ENCODE measurements at regions of chr5 and their contacts with region 1.

Region 1: DNA sequence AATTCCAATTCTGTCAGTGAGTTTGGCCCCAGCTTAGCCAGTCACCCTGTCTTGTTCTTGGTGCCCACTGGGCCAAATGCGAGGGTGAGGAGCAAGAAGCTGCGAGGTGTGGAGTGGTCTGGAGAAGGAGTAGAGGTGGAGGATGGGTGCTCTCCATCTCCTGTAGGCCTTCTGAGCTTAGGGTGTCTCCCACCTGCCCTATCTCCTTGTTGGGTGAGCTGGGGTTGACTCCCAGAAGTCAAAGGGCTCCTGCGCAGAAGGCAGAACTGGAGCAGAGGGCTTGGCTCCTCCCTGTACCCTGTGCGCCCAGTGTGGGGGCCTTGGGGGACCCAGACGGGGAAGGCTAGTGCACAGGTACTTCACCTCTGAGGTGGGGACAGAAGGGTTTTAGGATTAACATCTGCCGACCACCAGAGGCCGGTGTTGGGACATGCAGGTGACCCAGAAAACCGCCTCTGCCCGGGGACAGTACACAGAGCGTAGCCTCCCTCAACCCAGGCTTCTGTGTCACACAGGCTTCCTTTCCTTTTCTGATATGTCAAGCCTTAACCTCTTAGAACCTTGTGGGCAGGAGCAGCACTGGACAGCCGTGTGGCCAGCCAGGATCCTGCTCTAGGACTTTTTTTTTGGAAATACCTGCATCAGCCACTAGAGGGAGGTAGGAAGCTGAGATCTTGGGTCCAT is 16.9 kb downstream of the IL5 start:
- DNase-seq: peak; percentile 71
- ATAC-seq: peak; percentile 53
- H3K4me3 ChIP-seq: no peak overlapping the region
- H3K4me3 Mint-ChIP-seq: peak overlapping the region; percentile 8
- H3K27ac ChIP-seq: no peak overlapping the region
- H3K27ac Mint-ChIP-seq: no peak overlapping the region
- H3K4me1 ChIP-seq: peaks cover 41 to 45% of the 10 kb centered on the region in 2 donors
- H3K4me1 Mint-ChIP-seq: peaks cover 49% of the 10 kb centered on the region
- H3K27me3 ChIP-seq: no peaks in the 10 kb centered on the region
- H3K27me3 Mint-ChIP-seq: no peaks in the 10 kb centered on the region
- CTCF ChIP-seq: peak; percentile 89

Region 2: DNA sequence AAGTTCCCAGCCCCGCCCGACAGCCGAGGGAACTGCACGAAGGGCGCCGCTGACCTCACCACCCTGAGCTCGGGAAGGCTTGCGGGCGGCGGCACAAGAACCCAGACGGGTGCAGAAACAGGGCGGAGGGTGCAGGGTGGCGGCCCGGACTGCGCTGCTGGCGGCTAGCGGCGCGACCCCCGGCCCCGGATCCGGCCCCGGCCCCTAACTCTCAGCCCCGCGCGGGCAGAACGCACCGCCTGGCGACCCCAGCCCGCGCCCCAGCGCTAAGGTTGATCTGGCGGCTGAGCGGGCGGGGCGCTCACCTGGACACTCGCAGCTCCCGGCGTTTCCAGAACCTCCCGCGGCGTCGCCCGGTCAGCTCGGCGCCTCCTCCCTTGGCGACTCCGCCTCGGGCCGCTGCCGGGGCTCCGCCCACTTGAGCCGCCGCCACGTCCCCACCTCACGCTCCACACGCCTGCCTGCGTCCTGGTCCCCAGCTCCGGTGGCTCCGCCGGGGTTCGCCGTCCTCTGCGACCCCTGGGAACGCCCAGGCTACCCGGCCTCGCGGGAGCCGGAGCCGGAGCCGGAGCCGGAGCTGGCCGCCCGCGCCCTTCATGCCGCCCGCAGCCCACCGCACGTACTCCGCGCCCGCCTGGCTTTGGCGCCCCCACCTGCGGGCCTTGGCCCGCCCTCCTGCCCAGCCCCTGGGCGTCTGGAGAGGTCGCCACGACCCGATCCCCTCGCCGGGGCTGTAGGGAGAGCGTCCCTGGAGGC is 298.8 kb before region 1 on chr5 and contains the start of gene P4HA2:
- CTCF ChIA-PET with region 1: no interaction called
- POLR2A ChIA-PET with region 1: no interaction called
- intact Hi-C with region 1: no loop called
- DNase-seq: peak; percentile 57
- ATAC-seq: peak; percentile 85
- H3K4me3 ChIP-seq: peak within 1 kb of the TSS in 4 of 5 experiments; percentile 35 to 66 (median 61)
- H3K4me3 Mint-ChIP-seq: peak within 1 kb of the TSS; percentile 77
- H3K27ac ChIP-seq: no peak within 1 kb of the TSS
- H3K27ac Mint-ChIP-seq: no peak within 1 kb of the TSS
- H3K4me1 ChIP-seq: peaks cover 33 to 42% of the 10 kb centered on the region in 2 donors
- H3K4me1 Mint-ChIP-seq: peaks cover 39% of the 10 kb centered on the region
- H3K27me3 ChIP-seq: peaks cover 0 to 21% (median 9%) of the 10 kb centered on the region in 4 experiments
- H3K27me3 Mint-ChIP-seq: peaks cover 19% of the 10 kb centered on the region
- CTCF ChIP-seq: no peak
- total RNA-seq, gene P4HA2: 0.22 and 0.25 TPM in 2 replicates

Region 3: GRCh38 chr5:132540764-132541163 is 14.3 kb after region 1 on chr5:
- CTCF ChIA-PET with region 1: interaction called, 16 read pairs
- POLR2A ChIA-PET with region 1: no interaction called
- intact Hi-C with region 1: no loop called
- DNase-seq: no peak
- ATAC-seq: no peak
- H3K4me3 ChIP-seq: no peak overlapping the region
- H3K4me3 Mint-ChIP-seq: no peak overlapping the region
- H3K27ac ChIP-seq: no peak overlapping the region
- H3K27ac Mint-ChIP-seq: no peak overlapping the region
- H3K4me1 ChIP-seq: no peaks in the 10 kb centered on the region
- H3K4me1 Mint-ChIP-seq: no peaks in the 10 kb centered on the region
- H3K27me3 ChIP-seq: peaks cover 0 to 8% (median under 1%) of the 10 kb centered on the region in 4 experiments
- H3K27me3 Mint-ChIP-seq: peaks cover 17% of the 10 kb centered on the region
- CTCF ChIP-seq: no peak

Region 4: GRCh38 chr5:132714456-132715307 is 188.2 kb after region 1 on chr5:
- CTCF ChIA-PET with region 1: interaction called, 15 read pairs
- POLR2A ChIA-PET with region 1: no interaction called
- intact Hi-C with region 1: loop called (anchors 5 kb)
- DNase-seq: peak; percentile 19
- ATAC-seq: no peak
- H3K4me3 ChIP-seq: no peak overlapping the region
- H3K4me3 Mint-ChIP-seq: no peak overlapping the region
- H3K27ac ChIP-seq: no peak overlapping the region
- H3K27ac Mint-ChIP-seq: no peak overlapping the region
- H3K4me1 ChIP-seq: no peaks in the 10 kb centered on the region
- H3K4me1 Mint-ChIP-seq: no peaks in the 10 kb centered on the region
- H3K27me3 ChIP-seq: no peaks in the 10 kb centered on the region
- H3K27me3 Mint-ChIP-seq: no peaks in the 10 kb centered on the region
- CTCF ChIP-seq: peak; percentile 73

Region 5: GRCh38 chr5:132883261-132883834 is 356.9 kb after region 1 on chr5:
- CTCF ChIA-PET with region 1: interaction called, 20 read pairs
- POLR2A ChIA-PET with region 1: no interaction called
- intact Hi-C with region 1: no loop called
- DNase-seq: peak; percentile 69
- ATAC-seq: peak; percentile 53
- H3K4me3 ChIP-seq: no peak overlapping the region
- H3K4me3 Mint-ChIP-seq: no peak overlapping the region
- H3K27ac ChIP-seq: no peak overlapping the region
- H3K27ac Mint-ChIP-seq: no peak overlapping the region
- H3K4me1 ChIP-seq: no peaks in the 10 kb centered on the region
- H3K4me1 Mint-ChIP-seq: peaks cover 8% of the 10 kb centered on the region
- H3K27me3 ChIP-seq: no peaks in the 10 kb centered on the region
- H3K27me3 Mint-ChIP-seq: no peaks in the 10 kb centered on the region
- CTCF ChIP-seq: peak; percentile 78

Measured in B cell (primary cell).